Colonic mucosa (tissue), 4 donors: ENCODE measurements at regions of chr17 and their contacts with region 1.

Region 1: GRCh38 chr17:69414408-69415274 is at the start of gene MAP2K6:
- DNase-seq: peak; percentile 89
- H3K4me3 ChIP-seq: peak within 1 kb of the TSS; percentile 57
- H3K27ac ChIP-seq: peak within 1 kb of the TSS; percentile 40
- H3K4me1 ChIP-seq: peaks cover 8% of the 10 kb centered on the region
- H3K27me3 ChIP-seq: no peaks in the 10 kb centered on the region
- CTCF ChIP-seq: no peak
- total RNA-seq, gene MAP2K6: 59.0 to 83.3 TPM

Region 2: GRCh38 chr17:69506489-69506888 is 91.8 kb after region 1 on chr17:
- intact Hi-C with region 1: loop called (anchors 5 kb)
- DNase-seq: no peak
- H3K4me3 ChIP-seq: no peak overlapping the region
- H3K27ac ChIP-seq: no peak overlapping the region
- H3K4me1 ChIP-seq: no peaks in the 10 kb centered on the region
- H3K27me3 ChIP-seq: no peaks in the 10 kb centered on the region
- CTCF ChIP-seq: no peak

Region 3: DNA sequence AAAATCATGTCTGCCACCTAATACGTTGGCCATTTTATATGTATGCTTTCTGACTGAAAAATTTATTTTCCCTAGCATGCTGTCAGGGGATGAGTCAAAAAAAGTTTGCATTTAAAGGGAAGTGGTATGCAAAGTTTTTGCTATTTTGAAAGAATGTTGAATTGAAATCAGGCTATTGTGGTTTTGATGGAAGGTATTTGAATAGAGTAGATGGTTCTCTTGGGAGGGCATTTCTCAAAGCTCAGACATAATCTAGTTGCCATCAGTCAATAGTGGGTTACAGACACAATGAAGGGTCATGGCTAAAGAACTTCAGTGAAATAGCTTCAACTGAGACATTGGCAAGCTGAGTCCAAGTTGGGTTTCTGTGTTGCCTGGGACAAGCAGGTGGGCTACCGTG is 102.3 kb after region 1 on chr17:
- intact Hi-C with region 1: no loop called
- DNase-seq: no peak
- H3K4me3 ChIP-seq: no peak overlapping the region
- H3K27ac ChIP-seq: no peak overlapping the region
- H3K4me1 ChIP-seq: no peaks in the 10 kb centered on the region
- H3K27me3 ChIP-seq: no peaks in the 10 kb centered on the region
- CTCF ChIP-seq: no peak